Posterior vena cava (tissue), 2 donors: ENCODE measurements at regions of chr7 and their contacts with region 1.

Region 1: DNA sequence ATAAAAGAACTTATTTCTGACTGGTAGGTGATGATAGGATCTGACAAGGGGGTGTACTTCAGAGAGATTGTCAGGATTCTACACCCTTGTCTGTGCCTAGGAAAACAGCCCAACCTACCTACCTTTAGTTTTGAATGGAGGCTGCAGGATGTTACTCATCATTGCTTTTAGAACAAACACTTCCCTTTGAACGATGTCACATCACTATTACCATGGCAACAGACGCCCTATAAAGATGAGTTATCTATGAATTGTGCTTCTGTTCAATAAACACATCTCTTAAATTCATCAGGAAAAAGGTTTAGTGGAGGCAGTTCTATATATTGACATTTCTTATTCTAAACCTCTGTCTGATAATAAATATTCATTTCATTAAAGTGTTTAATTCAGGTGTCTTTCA is 362.4 kb downstream of the CNTNAP2 start:
- DNase-seq: no peak

Region 2: DNA sequence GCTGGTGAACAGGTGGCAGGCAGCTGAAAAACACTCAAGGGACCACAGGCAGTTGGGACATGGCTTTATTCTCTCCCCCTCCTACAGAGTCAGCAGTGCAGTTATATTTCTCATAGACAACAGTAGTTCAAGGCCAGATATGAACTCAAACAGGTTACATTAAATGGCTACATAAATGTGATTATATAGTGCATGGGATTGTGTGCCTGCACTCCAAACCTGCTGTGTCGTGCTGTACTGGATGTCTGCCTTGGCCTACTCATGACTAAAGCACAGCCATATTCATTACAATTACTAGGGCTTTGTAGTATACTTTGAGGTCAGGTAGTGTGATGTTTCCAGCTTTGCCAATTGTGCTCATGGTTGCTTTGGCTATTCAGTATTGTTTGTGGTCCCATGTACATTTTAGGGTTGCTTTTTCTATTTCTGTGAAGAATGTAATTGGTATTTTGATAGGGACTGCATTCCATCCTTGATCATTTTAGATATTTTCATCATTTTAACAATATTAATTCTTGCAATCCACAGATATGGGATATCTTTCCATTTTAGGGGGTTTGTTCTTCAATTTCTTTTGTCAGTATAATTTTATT is 31.1 kb after region 1 on chr7:
- intact Hi-C with region 1: no loop called
- DNase-seq: no peak

Region 3: DNA sequence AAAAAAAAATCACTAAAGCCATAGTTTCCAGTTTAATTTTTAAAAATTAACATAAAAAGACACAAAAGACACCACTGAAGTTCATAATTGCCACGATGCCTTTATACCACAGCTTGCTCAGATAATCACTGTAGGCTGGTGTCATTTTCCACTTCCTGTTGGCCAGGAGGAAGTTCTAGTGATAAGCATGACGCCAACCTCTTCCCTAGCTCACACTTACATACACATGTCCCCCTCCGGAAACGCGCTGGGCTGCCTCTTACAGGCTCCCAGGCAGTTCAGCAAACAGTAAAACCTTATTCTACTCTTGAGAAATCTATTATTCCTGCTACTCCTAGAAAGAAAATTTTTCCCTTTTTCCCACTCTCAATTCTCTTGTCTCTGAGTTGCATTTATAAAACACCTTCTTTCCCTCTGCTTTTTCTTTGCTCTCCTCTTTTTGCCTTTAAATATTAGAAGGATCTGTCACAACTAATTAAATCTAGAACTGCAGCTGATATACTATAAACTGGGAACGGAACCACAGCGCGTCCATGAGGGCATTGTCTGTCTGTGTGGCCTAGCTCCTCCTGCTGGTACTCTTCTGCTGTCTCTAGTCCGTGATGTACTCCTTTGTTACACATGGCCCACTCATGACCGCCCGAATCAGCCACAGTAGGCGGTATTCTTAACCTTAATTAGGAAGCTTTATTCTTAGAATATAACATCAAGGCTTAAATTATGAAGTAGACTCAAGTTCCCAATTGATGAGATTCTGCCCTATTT is 302.5 kb after region 1 on chr7:
- intact Hi-C with region 1: no loop called
- DNase-seq: no peak

Region 4: GRCh38 chr7:147298611-147299043 is 819.6 kb after region 1 on chr7:
- intact Hi-C with region 1: loop called in 1 of 2 experiments (anchors 5 kb)
- DNase-seq: no peak